ENCODE measurements at regions of chr4 and their contacts with region 1.

Region 1: GRCh38 chr4:153432968-153433753 is 33.0 kb upstream of the TMEM131L start:
- DNase-seq: peak; percentile 40 to 83 (median 56)
- H3K4me3 ChIP-seq: peak overlapping the region; percentile 60
- H3K4me3 Mint-ChIP-seq: peak overlapping the region; percentile 76 to 88 (median 86)
- H3K27ac ChIP-seq: no peak overlapping the region
- H3K27ac Mint-ChIP-seq: peak overlapping the region; percentile 71 to 96 (median 94)
- H3K4me1 ChIP-seq: peaks cover 59% of the 10 kb centered on the region
- H3K4me1 Mint-ChIP-seq: peaks cover 44 to 59% (median 56%) of the 10 kb centered on the region in 3 donors
- H3K27me3 ChIP-seq: no peaks in the 10 kb centered on the region
- H3K27me3 Mint-ChIP-seq: no peaks in the 10 kb centered on the region

Region 2: DNA sequence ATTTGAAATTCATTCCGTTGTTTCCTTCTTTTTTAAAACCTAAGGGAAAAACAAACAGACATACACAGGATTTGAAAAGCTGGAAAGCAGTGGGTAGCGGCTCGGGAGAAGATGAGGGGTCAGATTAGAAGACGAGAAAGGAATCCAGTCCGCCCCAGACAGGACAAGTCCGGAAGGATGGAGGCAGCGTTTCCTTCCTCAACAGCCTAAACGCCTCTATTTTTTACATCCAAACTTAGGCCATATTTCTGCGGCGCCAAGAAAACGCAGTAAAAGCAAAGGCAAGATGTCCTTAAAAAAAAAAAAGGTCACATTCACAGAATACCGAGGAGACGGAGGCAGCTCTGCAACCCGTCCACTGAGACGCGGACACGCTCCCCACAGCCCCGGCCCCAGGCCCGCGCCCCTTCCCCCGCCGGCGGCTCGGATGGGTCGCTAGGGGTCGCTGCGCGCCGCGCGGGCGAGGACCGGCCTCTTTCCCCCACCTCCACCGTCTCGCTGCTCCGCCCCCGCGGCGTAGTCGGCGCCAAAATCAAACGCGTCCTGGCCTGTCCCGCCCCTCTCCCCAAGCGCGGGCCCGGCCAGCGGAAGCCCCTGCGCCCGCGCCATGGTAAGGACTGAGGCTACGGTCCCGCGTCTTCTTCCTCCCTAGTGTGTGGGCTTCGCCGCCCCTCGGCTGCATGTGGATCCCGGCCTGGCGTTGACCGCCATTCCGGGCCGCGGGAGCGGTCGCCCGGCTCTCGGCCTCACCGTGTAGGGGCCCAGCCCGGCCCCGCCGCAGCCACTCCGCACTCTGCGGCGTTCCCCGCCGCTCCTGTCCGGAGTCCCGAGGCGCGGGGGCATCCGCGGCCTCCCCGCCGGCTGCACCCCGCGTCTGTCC is 88.8 kb before region 1 on chr4 and contains the start of gene MND1:
- CTCF ChIA-PET with region 1: interaction called, 11 read pairs
- POLR2A ChIA-PET with region 1: no interaction called
- DNase-seq: peak; percentile 83 to 92 (median 86)
- H3K4me3 ChIP-seq: peak within 1 kb of the TSS; percentile 81
- H3K4me3 Mint-ChIP-seq: peak within 1 kb of the TSS; percentile 92 to 97 (median 95)
- H3K27ac ChIP-seq: peak within 1 kb of the TSS; percentile 55
- H3K27ac Mint-ChIP-seq: peak within 1 kb of the TSS in 6 of 8 donors; percentile 24 to 89 (median 64)
- H3K4me1 ChIP-seq: peaks cover 4% of the 10 kb centered on the region
- H3K4me1 Mint-ChIP-seq: peaks cover 8 to 29% (median 14%) of the 10 kb centered on the region in 3 donors
- H3K27me3 ChIP-seq: no peaks in the 10 kb centered on the region
- H3K27me3 Mint-ChIP-seq: peaks cover 6 to 16% of the 10 kb centered on the region in 2 donors
- total RNA-seq, gene MND1: 20.2 to 21.6 TPM

Region 3: GRCh38 chr4:153466081-153466948 is 33.2 kb after region 1 on chr4 and contains the start of gene TMEM131L:
- CTCF ChIA-PET with region 1: interaction called, 46 read pairs
- POLR2A ChIA-PET with region 1: interaction called, 10 read pairs
- DNase-seq: peak; percentile 59 to 79 (median 74)
- H3K4me3 ChIP-seq: peak within 1 kb of the TSS; percentile 84
- H3K4me3 Mint-ChIP-seq: peak within 1 kb of the TSS; percentile 94 to 98 (median 96)
- H3K27ac ChIP-seq: peak within 1 kb of the TSS; percentile 77
- H3K27ac Mint-ChIP-seq: peak within 1 kb of the TSS; percentile 89 to 99 (median 97)
- H3K4me1 ChIP-seq: peaks cover 33% of the 10 kb centered on the region
- H3K4me1 Mint-ChIP-seq: peaks cover 45 to 53% (median 50%) of the 10 kb centered on the region in 3 donors
- H3K27me3 ChIP-seq: no peaks in the 10 kb centered on the region
- H3K27me3 Mint-ChIP-seq: peaks cover 0 to 3% of the 10 kb centered on the region in 2 donors
- total RNA-seq, gene TMEM131L: 28.1 to 29.6 TPM

Region 4: DNA sequence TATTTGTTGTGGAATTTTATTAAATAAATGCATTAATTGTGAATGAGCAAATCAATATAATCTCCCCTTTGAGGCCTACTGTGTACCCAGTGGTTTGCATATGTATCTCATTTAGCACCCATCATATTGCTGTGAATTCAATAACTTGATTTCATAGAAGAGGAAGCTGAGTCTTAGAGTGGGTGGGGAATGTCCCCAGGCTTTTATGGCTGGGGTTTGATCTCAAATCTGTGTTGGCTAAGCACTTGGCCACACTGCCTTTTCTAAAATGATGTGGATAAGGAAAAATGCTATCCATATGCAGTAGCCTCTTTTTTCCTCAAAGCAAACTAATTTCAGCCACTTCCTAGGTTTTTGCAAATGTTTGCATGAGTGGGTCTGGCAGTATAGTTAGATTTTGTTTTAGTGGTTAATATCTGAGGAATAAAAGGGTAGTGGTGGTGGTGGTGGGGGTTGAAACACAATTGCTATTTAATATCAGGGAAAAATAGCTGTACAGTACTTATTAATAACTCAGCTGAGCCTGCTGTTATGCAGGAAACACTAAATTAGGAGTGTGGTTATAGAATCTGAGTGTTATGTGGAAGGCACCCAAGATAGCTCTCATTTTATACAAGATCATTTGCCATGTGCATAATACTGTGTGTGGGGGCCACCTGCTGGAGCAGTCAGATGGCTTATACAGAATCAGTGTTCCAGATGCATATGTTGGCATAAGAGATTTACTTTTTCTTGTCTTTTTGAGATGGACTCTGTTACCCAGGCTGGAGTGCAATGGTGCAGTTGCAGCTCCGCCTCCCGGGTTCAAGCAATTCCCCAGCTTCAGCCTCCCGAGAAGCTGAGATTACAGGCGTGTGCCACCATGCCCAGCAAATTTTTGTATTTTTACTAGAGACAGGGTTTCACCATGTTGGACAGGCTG is 141.0 kb after region 1 on chr4:
- CTCF ChIA-PET with region 1: interaction called, 133 read pairs
- POLR2A ChIA-PET with region 1: interaction called, 6 read pairs
- DNase-seq: peak; percentile 33 to 80 (median 52)
- H3K4me3 ChIP-seq: no peak overlapping the region
- H3K4me3 Mint-ChIP-seq: peak overlapping the region in 3 of 7 donors; percentile 24 to 46 (median 30)
- H3K27ac ChIP-seq: no peak overlapping the region
- H3K27ac Mint-ChIP-seq: peak overlapping the region in 7 of 8 donors; percentile 22 to 90 (median 63)
- H3K4me1 ChIP-seq: peaks cover 20% of the 10 kb centered on the region
- H3K4me1 Mint-ChIP-seq: peaks cover 53 to 73% (median 65%) of the 10 kb centered on the region in 3 donors
- H3K27me3 ChIP-seq: no peaks in the 10 kb centered on the region
- H3K27me3 Mint-ChIP-seq: no peaks in the 10 kb centered on the region

Region 5: GRCh38 chr4:153585026-153585425 is 151.9 kb after region 1 on chr4:
- CTCF ChIA-PET with region 1: interaction called, 10 read pairs
- POLR2A ChIA-PET with region 1: no interaction called
- DNase-seq: no peak
- H3K4me3 ChIP-seq: no peak overlapping the region
- H3K4me3 Mint-ChIP-seq: no peak overlapping the region
- H3K27ac ChIP-seq: no peak overlapping the region
- H3K27ac Mint-ChIP-seq: peak overlapping the region in 4 of 8 donors; percentile 41 to 96 (median 66)
- H3K4me1 ChIP-seq: no peaks in the 10 kb centered on the region
- H3K4me1 Mint-ChIP-seq: peaks cover 7 to 33% (median 21%) of the 10 kb centered on the region in 3 donors
- H3K27me3 ChIP-seq: no peaks in the 10 kb centered on the region
- H3K27me3 Mint-ChIP-seq: no peaks in the 10 kb centered on the region